ENCODE measurements at regions of chr10 and their contacts with region 1.

Region 1: GRCh38 chr10:93916257-93917063 is 22.7 kb downstream of the SLC35G1 start:
- DNase-seq: no peak
- H3K4me3 ChIP-seq: no peak overlapping the region
- H3K27ac ChIP-seq: no peak overlapping the region
- H3K27me3 ChIP-seq: no peaks in the 10 kb centered on the region
- CTCF ChIP-seq: peak; percentile 57

Region 2: DNA sequence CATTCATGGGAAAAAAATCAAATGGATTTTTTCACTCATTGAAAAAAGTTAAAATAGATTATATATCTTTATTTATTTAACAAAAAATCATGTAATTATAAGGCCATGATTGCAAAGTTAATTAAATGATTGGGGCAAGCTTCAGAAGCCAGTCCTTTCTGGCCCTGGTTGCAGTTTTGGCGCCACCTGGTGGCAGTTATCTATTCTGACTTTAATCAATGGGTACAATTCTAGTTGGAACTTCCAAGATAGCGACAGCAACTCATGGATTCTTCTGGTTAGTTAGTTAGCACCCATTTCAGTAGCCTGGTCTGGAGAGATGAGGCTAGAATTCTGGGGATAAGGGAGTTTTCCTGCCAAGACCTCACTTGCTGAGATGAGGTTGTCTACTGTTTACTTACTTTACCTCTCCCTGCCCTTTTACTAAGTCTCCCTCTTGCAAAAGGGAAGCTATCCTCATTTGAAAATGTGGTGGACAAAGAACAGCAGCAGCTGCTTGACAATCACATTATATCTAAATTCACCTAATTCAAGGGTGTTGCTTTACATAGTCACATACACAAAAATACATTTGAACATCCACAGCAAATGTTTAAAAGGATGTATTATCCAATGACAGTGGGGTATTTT is 403.9 kb after region 1 on chr10:
- in situ Hi-C with region 1: loop called (anchors 25 kb)
- DNase-seq: peak; percentile 56
- H3K4me3 ChIP-seq: no peak overlapping the region
- H3K27ac ChIP-seq: no peak overlapping the region
- H3K27me3 ChIP-seq: no peaks in the 10 kb centered on the region
- CTCF ChIP-seq: peak; percentile 84

Measured in brain microvascular endothelial cell (primary cell).